Prostate gland (tissue), 2 donors: ENCODE measurements at regions of chr10 and their contacts with region 1.

Region 1: DNA sequence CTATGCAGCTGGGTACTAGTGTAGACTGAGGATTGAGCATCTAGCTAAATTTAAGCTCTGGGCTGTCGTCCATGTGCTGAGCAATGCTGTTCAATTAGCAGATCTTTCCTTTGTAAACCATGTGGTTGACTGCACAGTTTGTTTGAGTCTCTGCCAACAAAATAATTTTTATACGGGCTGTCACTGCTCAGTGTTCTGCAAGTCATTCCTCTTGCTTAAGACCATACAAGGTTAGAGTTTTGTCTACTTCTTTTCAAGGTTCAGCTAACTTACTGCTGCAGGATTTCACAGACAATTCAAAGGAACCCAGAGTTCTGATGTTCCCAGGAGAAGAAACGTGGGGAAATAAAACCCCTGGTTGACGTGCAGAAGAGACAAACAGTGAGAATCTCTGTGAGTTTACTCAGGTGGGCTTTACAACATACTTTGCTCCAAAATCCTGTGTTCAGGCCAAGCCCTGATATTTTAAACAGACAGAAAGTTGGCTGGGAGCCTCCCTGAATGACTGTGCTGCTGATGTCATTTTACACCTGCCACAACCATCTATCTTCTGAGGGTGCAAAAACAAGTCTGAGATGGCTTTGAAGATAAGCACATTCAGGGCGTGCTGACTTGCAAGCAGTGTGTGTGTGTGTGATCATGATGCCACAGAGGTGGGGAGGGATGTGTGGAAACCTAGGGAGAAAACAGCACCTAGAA is 177.1 kb upstream of the SVIL start:
- DNase-seq: peak; percentile 74
- H3K4me3 ChIP-seq: no peak overlapping the region
- H3K27ac ChIP-seq: peak overlapping the region; percentile 74 to 86
- H3K4me1 ChIP-seq: no peaks in the 10 kb centered on the region
- H3K27me3 ChIP-seq: no peaks in the 10 kb centered on the region
- CTCF ChIP-seq: no peak
- POLR2A ChIP-seq: no peak

Region 2: GRCh38 chr10:29635711-29636144 is 176.2 kb before region 1 on chr10:
- intact Hi-C with region 1: loop called (anchors 10 kb)
- DNase-seq: no peak
- H3K4me3 ChIP-seq: no peak overlapping the region
- H3K27ac ChIP-seq: peak overlapping the region; percentile 78 to 84
- H3K4me1 ChIP-seq: peaks cover 14% of the 10 kb centered on the region
- H3K27me3 ChIP-seq: no peaks in the 10 kb centered on the region
- CTCF ChIP-seq: no peak
- POLR2A ChIP-seq: no peak

Region 3: GRCh38 chr10:29735596-29736318 is 76.1 kb before region 1 on chr10:
- intact Hi-C with region 1: no loop called
- DNase-seq: peak; percentile 90
- H3K4me3 ChIP-seq: peak overlapping the region; percentile 79 to 86
- H3K27ac ChIP-seq: peak overlapping the region; percentile 95
- H3K4me1 ChIP-seq: no peaks in the 10 kb centered on the region
- H3K27me3 ChIP-seq: no peaks in the 10 kb centered on the region
- CTCF ChIP-seq: peak; percentile 89 to 99 (median 94)
- POLR2A ChIP-seq: peak; percentile 84